ENCODE measurements at regions of chr3 and their contacts with region 1.

Region 1: GRCh38 chr3:58491506-58492402 is at the start of gene KCTD6:
- DNase-seq: peak; percentile 96 to 98
- ATAC-seq: peak; percentile 98
- H3K4me3 ChIP-seq: peak within 1 kb of the TSS; percentile 77 to 98
- H3K27ac ChIP-seq: peak within 1 kb of the TSS; percentile 30 to 43
- H3K4me1 ChIP-seq: peaks cover 0 to 6% of the 10 kb centered on the region in 2 donors
- H3K27me3 ChIP-seq: no peaks in the 10 kb centered on the region
- total RNA-seq, gene KCTD6: 7.9 to 12.8 TPM

Region 2: DNA sequence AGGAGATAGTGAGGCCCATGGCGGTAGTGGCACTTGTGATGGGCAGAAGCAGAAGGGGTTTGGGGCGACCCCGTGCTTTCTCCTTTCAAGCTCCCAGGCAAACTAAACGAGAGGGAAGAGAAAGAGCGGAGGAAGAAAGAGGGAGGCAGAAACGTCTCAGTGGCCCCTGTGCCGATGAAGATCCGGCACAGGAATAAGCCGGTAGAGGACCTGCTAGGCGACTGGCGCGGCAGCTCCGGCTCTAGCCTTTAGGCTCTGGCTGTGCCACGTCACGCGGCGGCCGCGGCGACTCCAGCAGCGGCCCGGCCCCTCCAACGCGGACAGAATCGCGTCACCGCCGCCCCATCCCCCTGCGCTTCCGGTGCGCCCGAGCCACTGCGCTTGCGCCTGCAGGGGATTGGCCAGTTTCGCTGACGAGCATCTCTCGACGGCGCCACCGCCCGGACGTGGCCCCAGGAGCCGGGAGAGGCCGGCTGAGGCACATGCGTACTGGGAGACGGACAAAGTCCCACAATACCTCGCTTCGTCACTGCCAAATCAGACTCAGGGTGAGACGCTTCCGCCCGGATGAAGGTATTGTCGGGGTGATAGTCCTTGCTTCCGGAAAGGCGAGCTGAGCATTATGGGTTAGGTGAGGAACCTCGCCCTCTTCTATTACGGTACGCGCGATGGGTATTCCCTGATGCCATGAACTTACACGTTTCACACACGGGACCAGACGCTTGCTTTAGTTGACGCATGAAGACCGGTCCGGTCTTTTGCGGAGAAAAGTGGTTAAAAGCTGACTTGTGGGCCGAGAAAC is 894.4 kb before region 1 on chr3 and contains the start of gene ARF4:
- intact Hi-C with region 1: no loop called
- DNase-seq: peak; percentile 100
- ATAC-seq: peak; percentile 99
- H3K4me3 ChIP-seq: peak within 1 kb of the TSS; percentile 87 to 95
- H3K27ac ChIP-seq: peak within 1 kb of the TSS; percentile 85 to 97
- H3K4me1 ChIP-seq: peaks cover 0 to 3% of the 10 kb centered on the region in 2 donors
- H3K27me3 ChIP-seq: no peaks in the 10 kb centered on the region
- total RNA-seq, gene ARF4: 148 TPM

Region 3: GRCh38 chr3:58305882-58306711 is 185.7 kb before region 1 on chr3 and contains the starts of genes HTD2 and RPP14:
- intact Hi-C with region 1: loop called in 1 of 2 experiments (anchors 5 kb)
- DNase-seq: peak; percentile 99 to 100
- ATAC-seq: peak; percentile 99
- H3K4me3 ChIP-seq: peak within 1 kb of the TSS; percentile 74 to 83
- H3K27ac ChIP-seq: peak within 1 kb of the TSS; percentile 47 to 94
- H3K4me1 ChIP-seq: peaks cover 3% of the 10 kb centered on the region in 2 donors
- H3K27me3 ChIP-seq: no peaks in the 10 kb centered on the region
- total RNA-seq, gene HTD2: 6.5 to 7.8 TPM
- total RNA-seq, gene RPP14: 13.0 to 13.8 TPM

Region 4: GRCh38 chr3:58332575-58333188 is 159.1 kb before region 1 on chr3 and contains the start of gene PXK:
- intact Hi-C with region 1: loop called (anchors 2 kb)
- DNase-seq: peak; percentile 89 to 95
- ATAC-seq: peak; percentile 95
- H3K4me3 ChIP-seq: peak within 1 kb of the TSS; percentile 78 to 96
- H3K27ac ChIP-seq: peak within 1 kb of the TSS in 1 of 2 donors; percentile 52
- H3K4me1 ChIP-seq: peaks cover 0 to 7% of the 10 kb centered on the region in 2 donors
- H3K27me3 ChIP-seq: no peaks in the 10 kb centered on the region
- total RNA-seq, gene PXK: 19.8 to 32.6 TPM

Region 5: DNA sequence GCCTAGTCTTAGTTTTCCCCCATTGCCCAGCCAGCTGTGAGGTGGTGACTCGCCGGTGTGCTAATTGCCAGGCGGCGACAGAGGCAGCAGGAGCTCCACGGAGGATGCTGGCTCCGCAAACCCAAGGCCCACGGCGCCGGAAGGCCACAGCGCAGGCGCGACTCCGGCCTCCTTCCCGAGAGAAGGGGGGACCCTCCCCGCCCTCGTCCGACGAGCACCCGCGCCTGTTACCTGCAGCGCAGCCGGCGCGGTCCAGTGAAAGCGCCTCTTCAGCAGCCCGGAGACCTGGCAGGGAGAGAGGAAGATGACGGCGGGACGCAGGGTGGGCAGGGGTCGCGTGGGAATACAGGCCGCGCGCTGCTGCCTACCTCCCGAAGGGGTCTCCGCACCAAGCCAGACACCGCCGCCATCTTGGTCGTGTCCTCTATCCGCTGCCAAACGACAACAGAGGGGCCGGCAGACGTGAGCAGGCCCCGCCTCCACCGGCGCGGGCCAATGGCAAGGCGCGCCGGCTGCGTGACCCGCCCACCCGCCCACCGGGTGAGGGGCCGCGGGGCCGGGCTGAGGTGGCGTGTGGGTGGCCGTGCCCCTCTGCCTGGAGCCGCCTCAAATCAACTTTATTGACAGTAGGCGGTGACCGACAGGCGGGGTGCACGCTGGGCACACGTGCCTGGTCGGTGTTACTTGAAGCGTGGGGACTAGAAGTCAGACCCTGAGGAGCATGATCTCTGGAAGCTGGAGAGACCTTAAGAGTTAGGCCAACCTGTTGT is 58.2 kb before region 1 on chr3 and contains the start of gene PDHB:
- intact Hi-C with region 1: loop called (anchors 5 kb)
- DNase-seq: peak; percentile 96 to 99
- ATAC-seq: peak; percentile 97
- H3K4me3 ChIP-seq: peak within 1 kb of the TSS; percentile 32 to 55
- H3K27ac ChIP-seq: peak within 1 kb of the TSS in 1 of 2 donors; percentile 60
- H3K4me1 ChIP-seq: no peaks in the 10 kb centered on the region
- H3K27me3 ChIP-seq: no peaks in the 10 kb centered on the region
- total RNA-seq, gene PDHB: 49.0 to 49.9 TPM

Region 6: GRCh38 chr3:58463181-58463941 is 28.4 kb before region 1 on chr3:
- intact Hi-C with region 1: loop called in 1 of 2 experiments (anchors 2 kb)
- DNase-seq: peak; percentile 81 to 87
- ATAC-seq: peak; percentile 86
- H3K4me3 ChIP-seq: peak overlapping the region in 1 of 2 donors; percentile 3
- H3K27ac ChIP-seq: no peak overlapping the region
- H3K4me1 ChIP-seq: no peaks in the 10 kb centered on the region
- H3K27me3 ChIP-seq: no peaks in the 10 kb centered on the region

Region 7: DNA sequence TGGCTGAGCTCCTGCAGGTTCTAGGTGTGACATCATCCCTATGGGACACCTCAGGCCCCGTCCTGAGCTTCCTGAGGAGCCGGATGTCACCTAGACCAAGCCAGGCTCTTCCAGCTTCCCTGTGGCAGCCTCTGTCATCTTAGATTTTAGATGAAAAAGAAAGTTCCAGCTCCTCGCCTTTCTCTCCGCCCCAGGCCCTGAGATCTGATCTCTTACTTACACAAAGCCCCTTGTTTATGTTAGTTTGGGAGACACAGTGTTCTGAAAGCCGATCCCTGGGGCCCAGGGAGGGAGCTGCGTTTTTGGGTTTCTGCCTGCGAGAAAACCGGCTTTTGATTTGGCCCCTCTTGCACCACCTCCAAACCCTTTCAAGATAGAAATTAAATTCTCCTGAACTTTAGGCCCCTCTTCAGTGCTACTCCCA is 125.6 kb after region 1 on chr3:
- intact Hi-C with region 1: no loop called
- DNase-seq: no peak
- ATAC-seq: peak; percentile 20
- H3K4me3 ChIP-seq: no peak overlapping the region
- H3K27ac ChIP-seq: no peak overlapping the region
- H3K4me1 ChIP-seq: no peaks in the 10 kb centered on the region
- H3K27me3 ChIP-seq: no peaks in the 10 kb centered on the region

Region 8: GRCh38 chr3:58776231-58776630 is 284.5 kb after region 1 on chr3:
- intact Hi-C with region 1: no loop called
- DNase-seq: no peak
- ATAC-seq: no peak
- H3K4me3 ChIP-seq: no peak overlapping the region
- H3K27ac ChIP-seq: no peak overlapping the region
- H3K4me1 ChIP-seq: no peaks in the 10 kb centered on the region
- H3K27me3 ChIP-seq: no peaks in the 10 kb centered on the region

Measured in aorta (tissue), 5 donors.